ENCODE measurements at regions of chr13 and their contacts with region 1.

Region 1: GRCh38 chr13:28324181-28324789 is 170.6 kb downstream of the FLT1 start:
- H3K4me3 ChIP-seq: no peak overlapping the region
- H3K27ac ChIP-seq: no peak overlapping the region
- H3K4me1 ChIP-seq: no peaks in the 10 kb centered on the region; the same call in 1 of the 2 replicates
- CTCF ChIP-seq: peak; percentile 25; the same call in 1 of the 2 replicates

Region 2: DNA sequence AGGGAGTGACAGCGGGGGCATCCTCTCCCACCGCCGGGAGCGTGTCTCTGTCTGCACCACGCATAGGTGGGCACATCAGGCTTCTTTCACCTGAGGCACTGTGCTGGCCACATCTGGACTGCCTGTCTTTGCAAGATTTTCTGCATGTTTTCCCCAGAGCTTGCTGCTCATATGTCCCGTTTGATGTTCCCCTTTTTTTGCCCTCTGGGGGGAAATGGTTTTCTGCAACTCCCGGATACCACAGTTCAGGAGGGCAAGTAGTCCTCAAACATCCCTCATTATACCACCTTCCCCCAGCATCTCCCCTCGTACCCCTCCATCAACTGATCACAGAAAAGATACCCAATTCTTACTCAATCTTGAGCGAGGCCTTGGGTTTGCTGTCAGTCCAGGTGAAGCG is 18.0 kb before region 1 on chr13:
- CTCF ChIA-PET with region 1: no interaction called
- POLR2A ChIA-PET with region 1: no interaction called
- H3K4me3 ChIP-seq: no peak overlapping the region
- H3K27ac ChIP-seq: no peak overlapping the region
- H3K4me1 ChIP-seq: no peaks in the 10 kb centered on the region
- CTCF ChIP-seq: no peak

Region 3: GRCh38 chr13:28349907-28350654 is 25.8 kb after region 1 on chr13:
- CTCF ChIA-PET with region 1: interaction called, 10 read pairs
- POLR2A ChIA-PET with region 1: no interaction called
- H3K4me3 ChIP-seq: no peak overlapping the region
- H3K27ac ChIP-seq: no peak overlapping the region
- H3K4me1 ChIP-seq: no peaks in the 10 kb centered on the region
- CTCF ChIP-seq: no peak

Region 4: DNA sequence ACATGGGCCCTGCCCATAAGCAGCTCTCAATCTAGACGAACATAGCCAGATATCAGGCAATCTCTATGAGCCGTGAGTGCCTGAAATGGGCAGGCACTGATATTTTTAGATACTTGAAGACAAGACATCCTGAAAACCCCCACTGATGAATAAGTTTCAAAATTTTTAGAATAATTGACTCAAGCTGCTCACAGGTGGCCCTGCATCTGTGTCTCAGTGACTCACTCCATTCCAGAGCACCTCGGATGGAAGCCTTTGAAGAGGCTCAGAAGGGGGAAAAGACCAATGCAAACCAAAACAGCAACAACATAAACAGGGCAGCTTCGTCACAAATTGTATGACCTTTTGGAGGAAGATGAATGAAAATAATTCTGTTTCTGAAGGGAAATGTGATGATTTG is 437.3 kb after region 1 on chr13:
- CTCF ChIA-PET with region 1: no interaction called
- POLR2A ChIA-PET with region 1: no interaction called
- H3K4me3 ChIP-seq: no peak overlapping the region
- H3K27ac ChIP-seq: no peak overlapping the region
- H3K4me1 ChIP-seq: no peaks in the 10 kb centered on the region
- CTCF ChIP-seq: no peak